OCI-LY7 (cell line): ENCODE measurements at regions of chr12 and their contacts with region 1.

Region 1: GRCh38 chr12:94745562-94745961 is 95.2 kb upstream of the TMCC3 start:
- DNase-seq: no peak
- H3K4me3 ChIP-seq: no peak overlapping the region
- H3K27ac ChIP-seq: no peak overlapping the region
- H3K4me1 ChIP-seq: no peaks in the 10 kb centered on the region
- CTCF ChIP-seq: no peak

Region 2: GRCh38 chr12:94930216-94930654 is 184.7 kb after region 1 on chr12:
- CTCF ChIA-PET with region 1: no interaction called
- POLR2A ChIA-PET with region 1: no interaction called
- intact Hi-C with region 1: no loop called
- DNase-seq: no peak
- H3K4me3 ChIP-seq: no peak overlapping the region
- H3K27ac ChIP-seq: no peak overlapping the region
- H3K4me1 ChIP-seq: no peaks in the 10 kb centered on the region
- CTCF ChIP-seq: no peak

Region 3: DNA sequence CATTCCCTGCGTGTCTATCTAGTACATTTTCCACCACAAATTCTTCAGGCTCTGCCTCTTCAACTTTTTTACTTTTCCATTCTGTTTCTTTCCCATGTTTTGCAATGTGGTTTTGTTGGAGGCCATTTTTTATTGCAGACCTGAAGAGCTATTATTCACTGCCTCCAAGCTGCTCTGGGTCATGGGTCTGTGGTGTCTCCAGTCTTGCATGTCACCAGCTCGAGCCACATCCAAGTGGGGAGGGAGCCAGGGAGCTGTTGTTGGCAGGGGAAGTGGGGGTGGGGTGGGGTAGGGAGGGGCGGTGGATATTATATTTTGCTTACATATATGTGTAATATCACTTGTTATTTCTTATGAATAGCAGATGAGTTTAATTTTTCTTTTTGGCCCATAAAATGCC is 541.2 kb after region 1 on chr12:
- CTCF ChIA-PET with region 1: no interaction called
- POLR2A ChIA-PET with region 1: interaction called, 11 read pairs
- intact Hi-C with region 1: no loop called
- DNase-seq: no peak
- H3K4me3 ChIP-seq: no peak overlapping the region
- H3K27ac ChIP-seq: no peak overlapping the region
- H3K4me1 ChIP-seq: no peaks in the 10 kb centered on the region
- CTCF ChIP-seq: no peak